PC-9 (cell line): ENCODE measurements at regions of chr22 and their contacts with region 1.

Region 1: DNA sequence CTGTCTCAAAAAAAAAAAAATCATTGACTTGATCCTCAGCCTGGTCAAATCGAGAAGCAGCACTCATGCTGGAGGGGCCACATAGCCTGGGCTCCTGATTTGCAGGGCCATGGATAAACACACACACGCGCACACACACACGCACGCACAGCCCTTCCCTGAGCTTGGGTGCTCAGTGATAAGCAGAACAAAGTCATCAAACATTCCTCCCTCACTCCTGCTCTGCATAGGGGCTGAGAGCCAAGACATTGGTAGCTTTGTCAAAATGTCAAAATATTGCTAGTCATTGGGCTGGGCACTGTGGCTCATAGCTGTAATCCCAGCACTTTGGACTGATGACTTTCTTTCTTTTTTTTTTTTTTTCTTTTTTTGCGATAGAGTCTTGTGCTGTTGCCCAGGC is 34.0 kb upstream of the A4GALT start:
- DNase-seq: peak; percentile 52 to 73
- H3K4me3 ChIP-seq: no peak overlapping the region
- H3K27ac ChIP-seq: peak overlapping the region; percentile 54
- H3K4me1 ChIP-seq: peaks cover 40% of the 10 kb centered on the region
- H3K27me3 ChIP-seq: no peaks in the 10 kb centered on the region
- CTCF ChIP-seq: no peak

Region 2: DNA sequence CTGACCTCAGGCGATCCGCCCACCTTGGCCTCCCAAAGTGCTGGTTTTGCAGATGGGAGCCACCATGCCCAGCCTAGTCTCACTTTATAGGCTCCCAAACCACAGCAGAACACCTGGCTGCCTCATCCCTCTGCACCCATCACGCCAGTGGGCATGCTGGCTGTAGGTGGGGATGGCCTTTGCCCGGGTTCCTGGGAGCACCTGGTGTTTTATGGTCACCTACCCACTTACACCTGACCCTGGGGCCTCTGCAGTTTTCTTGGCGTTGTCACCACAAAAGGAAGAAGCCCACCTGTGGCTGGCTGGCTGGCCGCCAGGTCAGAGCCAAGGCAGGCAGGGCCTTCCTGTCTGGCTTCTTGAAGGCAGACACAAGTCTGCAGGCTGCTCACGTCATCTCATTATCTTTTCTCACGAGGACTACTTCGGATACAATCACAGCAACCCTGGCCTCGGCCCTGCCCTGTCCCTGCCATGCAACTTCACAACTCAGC is 243.2 kb before region 1 on chr22:
- CTCF ChIA-PET with region 1: no interaction called
- POLR2A ChIA-PET with region 1: no interaction called
- intact Hi-C with region 1: no loop called
- DNase-seq: no peak
- H3K4me3 ChIP-seq: no peak overlapping the region
- H3K27ac ChIP-seq: no peak overlapping the region
- H3K4me1 ChIP-seq: no peaks in the 10 kb centered on the region
- H3K27me3 ChIP-seq: no peaks in the 10 kb centered on the region
- CTCF ChIP-seq: no peak

Region 3: GRCh38 chr22:42725606-42726355 is 28.9 kb before region 1 on chr22:
- CTCF ChIA-PET with region 1: no interaction called
- POLR2A ChIA-PET with region 1: interaction called, 3 read pairs
- intact Hi-C with region 1: loop called (anchors 2 kb)
- DNase-seq: no peak
- H3K4me3 ChIP-seq: no peak overlapping the region
- H3K27ac ChIP-seq: no peak overlapping the region
- H3K4me1 ChIP-seq: peaks cover 42% of the 10 kb centered on the region
- H3K27me3 ChIP-seq: peaks cover 10% of the 10 kb centered on the region
- CTCF ChIP-seq: no peak

Region 4: GRCh38 chr22:42863349-42863961 is 108.8 kb after region 1 on chr22:
- CTCF ChIA-PET with region 1: no interaction called
- POLR2A ChIA-PET with region 1: no interaction called
- intact Hi-C with region 1: no loop called
- DNase-seq: peak; percentile 66 to 95
- H3K4me3 ChIP-seq: no peak overlapping the region
- H3K27ac ChIP-seq: peak overlapping the region; percentile 95
- H3K4me1 ChIP-seq: peaks cover 42% of the 10 kb centered on the region
- H3K27me3 ChIP-seq: no peaks in the 10 kb centered on the region
- CTCF ChIP-seq: no peak